Activated CD4-positive, alpha-beta T cell treated with anti-CD3 and anti-CD28 coated beads, Interleukin-2, amount 10 ng/mL, durations not matched to agents 24 days and 14 days (primary cell): ENCODE measurements at regions of chr6 and their contacts with region 1.

Region 1: DNA sequence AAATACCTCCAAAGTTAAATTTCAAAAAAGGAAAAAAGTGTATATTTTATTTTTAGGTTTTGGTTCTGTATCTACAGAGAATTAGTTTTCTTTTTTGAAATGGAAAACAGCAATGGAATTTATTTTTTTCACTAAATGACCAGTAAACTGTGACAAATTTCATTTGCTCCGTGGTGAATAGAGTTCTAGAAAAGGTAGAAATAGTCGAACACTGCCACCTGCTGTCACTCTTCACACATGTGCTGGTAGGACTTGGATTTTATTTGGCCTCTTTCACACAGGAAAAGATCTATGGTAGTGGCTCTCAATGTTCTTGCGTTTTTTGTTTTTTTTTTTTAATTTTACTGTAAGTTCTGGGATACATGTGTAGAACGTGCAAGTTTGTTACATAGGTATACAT is 312.5 kb downstream of the EYA4 start:
- DNase-seq: peak; percentile 75
- H3K4me3 Mint-ChIP-seq: no peak overlapping the region
- H3K27ac Mint-ChIP-seq: no peak overlapping the region
- H3K4me1 Mint-ChIP-seq: no peaks in the 10 kb centered on the region
- H3K27me3 Mint-ChIP-seq: no peaks in the 10 kb centered on the region

Region 2: DNA sequence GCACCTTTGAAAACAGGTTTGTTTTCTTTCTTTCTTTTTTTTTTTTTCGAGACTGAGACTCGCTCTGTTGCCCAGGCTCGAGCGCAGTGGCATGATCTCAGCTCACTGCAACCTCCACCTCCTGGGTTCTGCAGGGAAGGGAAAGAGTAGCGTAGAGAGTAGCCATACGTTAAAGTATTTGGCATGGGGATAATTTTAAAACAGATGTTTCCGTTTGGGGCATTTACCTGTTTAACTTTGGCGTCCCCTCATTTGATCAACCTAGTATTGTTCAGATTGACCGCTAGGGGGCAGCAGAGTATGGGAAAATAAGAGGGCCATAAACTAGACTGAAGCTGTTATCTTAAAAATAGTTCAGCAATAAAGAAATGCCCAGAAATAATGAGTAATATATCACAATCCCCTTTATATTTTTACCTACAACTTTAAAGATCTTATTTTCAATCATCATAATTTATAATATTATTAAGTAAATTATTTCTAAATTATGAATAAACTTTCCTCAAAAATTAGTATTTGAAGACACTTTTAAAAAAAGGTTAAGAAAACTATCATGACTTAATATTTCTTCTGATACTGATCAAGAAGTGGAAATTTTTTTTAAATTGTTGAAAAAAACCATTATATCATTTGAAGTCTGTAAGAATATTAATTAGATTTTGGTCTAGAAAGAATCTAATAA is 1023.2 kb before region 1 on chr6:
- intact Hi-C with region 1: loop called (anchors 5 kb)
- DNase-seq: peak; percentile 90
- H3K4me3 Mint-ChIP-seq: no peak overlapping the region
- H3K27ac Mint-ChIP-seq: no peak overlapping the region
- H3K4me1 Mint-ChIP-seq: no peaks in the 10 kb centered on the region
- H3K27me3 Mint-ChIP-seq: peaks cover 23% of the 10 kb centered on the region

Region 3: DNA sequence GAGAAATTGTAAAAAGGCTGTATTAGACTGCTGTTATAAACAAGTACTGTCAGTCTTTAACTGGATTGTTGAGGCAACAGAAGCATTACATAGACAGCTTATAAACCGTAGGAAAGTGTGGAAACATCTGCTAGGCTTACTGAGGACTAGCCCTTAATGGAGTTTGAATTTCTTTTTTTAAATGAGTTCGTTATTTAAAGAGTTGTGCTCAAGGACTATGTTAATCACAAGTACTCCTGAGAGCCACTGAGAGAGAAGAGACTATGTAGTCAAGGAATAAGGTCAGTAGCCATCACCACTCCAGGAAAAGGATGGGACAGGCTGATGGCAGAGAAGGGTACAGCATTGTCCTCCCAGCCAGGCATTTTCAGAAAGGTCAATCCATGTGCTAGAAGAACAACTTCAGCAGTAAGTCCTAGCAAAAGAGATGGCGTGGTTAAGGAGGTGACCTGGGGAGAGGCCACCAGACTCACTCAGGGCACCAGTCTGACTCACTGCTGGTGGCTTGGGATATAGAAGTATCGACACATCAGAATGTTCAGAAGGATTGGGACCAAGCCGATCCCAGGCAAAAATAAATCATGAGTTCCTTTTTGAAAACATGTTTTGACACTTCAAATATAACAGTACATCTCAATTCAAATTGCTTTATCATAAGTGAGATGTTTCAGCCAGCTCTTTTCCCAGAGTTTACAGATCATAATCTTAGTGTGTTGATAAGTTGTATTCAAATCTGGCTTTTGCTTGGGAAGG is 732.8 kb before region 1 on chr6:
- intact Hi-C with region 1: loop called (anchors 5 kb)
- DNase-seq: peak; percentile 51
- H3K4me3 Mint-ChIP-seq: no peak overlapping the region
- H3K27ac Mint-ChIP-seq: peak overlapping the region; percentile 14
- H3K4me1 Mint-ChIP-seq: peaks cover 39% of the 10 kb centered on the region
- H3K27me3 Mint-ChIP-seq: no peaks in the 10 kb centered on the region

Region 4: GRCh38 chr6:132962936-132963868 is 590.5 kb before region 1 on chr6:
- intact Hi-C with region 1: loop called (anchors 5 kb)
- DNase-seq: peak; percentile 90
- H3K4me3 Mint-ChIP-seq: no peak overlapping the region
- H3K27ac Mint-ChIP-seq: no peak overlapping the region
- H3K4me1 Mint-ChIP-seq: peaks cover 20% of the 10 kb centered on the region
- H3K27me3 Mint-ChIP-seq: peaks cover 25% of the 10 kb centered on the region

Region 5: GRCh38 chr6:133184798-133185372 is 368.8 kb before region 1 on chr6:
- intact Hi-C with region 1: loop called (anchors 10 kb)
- DNase-seq: no peak
- H3K4me3 Mint-ChIP-seq: no peak overlapping the region
- H3K27ac Mint-ChIP-seq: no peak overlapping the region
- H3K4me1 Mint-ChIP-seq: no peaks in the 10 kb centered on the region
- H3K27me3 Mint-ChIP-seq: no peaks in the 10 kb centered on the region

Region 6: GRCh38 chr6:133202610-133203343 is 350.9 kb before region 1 on chr6:
- intact Hi-C with region 1: no loop called
- DNase-seq: no peak
- H3K4me3 Mint-ChIP-seq: no peak overlapping the region
- H3K27ac Mint-ChIP-seq: no peak overlapping the region
- H3K4me1 Mint-ChIP-seq: no peaks in the 10 kb centered on the region
- H3K27me3 Mint-ChIP-seq: no peaks in the 10 kb centered on the region